A673 (cell line): ENCODE measurements at regions of chr3 and their contacts with region 1.

Region 1: GRCh38 chr3:34106879-34107278 is 308.4 kb downstream of the PDCD6IP start:
- DNase-seq: peak; percentile 84
- H3K4me3 ChIP-seq: no peak overlapping the region
- H3K27ac ChIP-seq: peak overlapping the region; percentile 28
- H3K4me1 ChIP-seq: peaks cover 35% of the 10 kb centered on the region
- H3K27me3 ChIP-seq: no peaks in the 10 kb centered on the region
- CTCF ChIP-seq: peak; percentile 81

Region 2: GRCh38 chr3:33848624-33849347 is 258.1 kb before region 1 on chr3:
- CTCF ChIA-PET with region 1: no interaction called
- POLR2A ChIA-PET with region 1: no interaction called
- intact Hi-C with region 1: no loop called
- DNase-seq: no peak
- H3K4me3 ChIP-seq: no peak overlapping the region
- H3K27ac ChIP-seq: no peak overlapping the region
- H3K4me1 ChIP-seq: no peaks in the 10 kb centered on the region
- H3K27me3 ChIP-seq: no peaks in the 10 kb centered on the region
- CTCF ChIP-seq: no peak

Region 3: DNA sequence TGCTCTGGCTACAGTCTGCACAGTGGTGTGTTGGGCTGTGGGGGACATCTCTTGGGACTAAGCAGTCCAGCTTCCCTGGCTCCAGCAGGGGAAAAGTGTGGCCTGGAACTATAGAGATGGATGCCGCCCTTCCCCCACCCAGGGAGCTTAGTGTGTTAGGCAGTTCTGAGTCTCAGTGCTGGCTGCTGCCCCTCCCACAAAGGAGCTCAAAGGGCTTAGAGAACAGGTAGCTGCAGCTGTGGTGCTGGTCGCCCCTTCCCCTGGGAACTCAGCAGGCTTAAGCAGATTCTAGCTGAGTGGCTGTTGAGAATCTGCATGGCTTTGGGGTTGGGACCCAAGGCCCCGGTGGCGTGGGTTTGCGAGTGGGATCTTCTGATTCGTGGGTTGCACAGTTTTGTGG is 117.7 kb before region 1 on chr3:
- CTCF ChIA-PET with region 1: no interaction called
- POLR2A ChIA-PET with region 1: no interaction called
- intact Hi-C with region 1: no loop called
- DNase-seq: no peak
- H3K4me3 ChIP-seq: no peak overlapping the region
- H3K27ac ChIP-seq: no peak overlapping the region
- H3K4me1 ChIP-seq: no peaks in the 10 kb centered on the region
- H3K27me3 ChIP-seq: no peaks in the 10 kb centered on the region
- CTCF ChIP-seq: no peak

Region 4: GRCh38 chr3:34200576-34200975 is 93.7 kb after region 1 on chr3:
- CTCF ChIA-PET with region 1: no interaction called
- POLR2A ChIA-PET with region 1: no interaction called
- intact Hi-C with region 1: loop called (anchors 5 kb)
- DNase-seq: peak; percentile 76
- H3K4me3 ChIP-seq: no peak overlapping the region
- H3K27ac ChIP-seq: peak overlapping the region; percentile 62
- H3K4me1 ChIP-seq: peaks cover 34% of the 10 kb centered on the region
- H3K27me3 ChIP-seq: no peaks in the 10 kb centered on the region
- CTCF ChIP-seq: no peak